Left colon (tissue), 2 donors: ENCODE measurements at regions of chr6 and their contacts with region 1.

Region 1: DNA sequence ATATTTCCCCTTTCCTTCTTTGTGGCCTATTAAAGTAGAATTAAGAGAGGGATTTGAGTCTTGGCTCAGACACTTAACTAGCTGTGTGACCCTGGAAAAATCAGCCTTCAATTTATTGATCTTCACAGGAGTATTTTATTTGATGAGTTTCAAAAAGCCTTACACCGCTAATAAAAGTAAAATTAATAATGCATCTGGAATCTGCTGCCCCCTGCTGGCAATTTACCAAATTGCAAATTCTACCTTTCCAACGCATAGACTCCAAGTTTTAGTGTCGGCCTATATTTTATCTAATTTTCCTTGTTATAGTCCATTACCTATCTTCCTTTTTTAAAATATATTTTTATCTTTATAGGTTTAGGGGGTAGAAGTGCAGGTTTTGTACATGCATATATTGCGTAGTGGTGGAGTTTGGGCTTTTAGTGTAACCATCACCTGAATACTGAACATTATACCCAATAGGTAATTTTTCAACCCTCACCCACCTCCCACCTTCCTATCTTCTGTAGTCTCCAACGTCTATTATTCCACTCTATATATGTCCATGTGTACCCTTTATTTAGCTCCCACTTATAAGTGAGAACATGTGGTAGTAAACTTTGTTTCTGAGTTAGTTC is 46.3 kb downstream of the GOPC start:
- DNase-seq: peak in 1 of 2 donors; percentile 43
- ATAC-seq: no peak

Region 2: DNA sequence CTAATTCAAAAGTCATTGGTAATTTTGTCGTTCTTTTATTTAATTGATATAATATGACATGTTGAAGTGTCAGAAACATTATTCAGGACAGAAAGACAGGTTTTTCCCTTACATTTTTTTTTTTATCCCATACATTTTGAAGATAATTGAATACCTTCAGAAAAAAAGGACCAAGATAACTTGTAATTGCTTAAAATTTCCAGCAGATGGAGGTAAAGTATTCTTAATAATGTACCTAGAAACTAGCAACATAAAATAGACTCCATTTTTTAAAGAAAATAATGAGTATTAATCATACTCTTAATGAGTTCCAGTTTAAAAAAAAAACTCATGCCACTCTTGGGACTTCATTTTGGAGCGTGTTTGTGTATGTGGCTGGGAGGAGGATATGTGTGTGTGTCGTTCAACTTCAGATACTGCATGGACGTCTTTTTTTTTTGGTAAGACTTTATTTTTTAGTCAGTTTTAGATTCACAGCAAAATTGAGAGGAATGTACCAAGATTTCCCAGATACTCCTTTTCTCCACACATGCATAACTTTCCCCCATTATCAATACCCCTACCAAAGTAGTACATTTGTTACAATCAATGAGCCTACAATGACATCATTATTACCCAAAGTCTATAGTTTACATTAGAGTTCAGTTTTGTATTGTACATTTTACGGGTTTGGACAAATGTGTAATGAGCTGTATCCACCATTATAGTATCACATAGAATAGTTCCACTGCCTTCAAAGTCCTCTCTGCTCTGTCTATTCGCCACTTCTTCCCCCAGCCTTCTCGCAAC is 209.7 kb before region 1 on chr6:
- intact Hi-C with region 1: loop called in 1 of 2 experiments (anchors 5 kb)
- DNase-seq: no peak
- ATAC-seq: no peak

Region 3: GRCh38 chr6:117449549-117450439 is 106.2 kb before region 1 on chr6:
- intact Hi-C with region 1: loop called (anchors 5 to 10 kb)
- DNase-seq: peak; percentile 31 to 70
- ATAC-seq: peak; percentile 38